GM12878 (cell line): ENCODE measurements at regions of chr18 and their contacts with region 1.

Region 1: GRCh38 chr18:63016270-63016669 is 300.9 kb downstream of the PHLPP1 start:
- DNase-seq: peak; percentile 21
- ATAC-seq: peak; percentile 92
- H3K4me3 ChIP-seq: no peak overlapping the region
- H3K27ac ChIP-seq: no peak overlapping the region
- H3K4me1 ChIP-seq: no peaks in the 10 kb centered on the region
- H3K27me3 ChIP-seq: no peaks in the 10 kb centered on the region
- CTCF ChIP-seq: peak; percentile 72 to 88 (median 72)
- EP300 ChIP-seq: no peak
- POLR2A ChIP-seq: no peak
- RAD21 ChIP-seq: peak; percentile 99

Region 2: GRCh38 chr18:62863579-62864001 is 152.7 kb before region 1 on chr18:
- CTCF ChIA-PET with region 1: no interaction called
- POLR2A ChIA-PET with region 1: no interaction called
- RAD21 ChIA-PET with region 1: no interaction called
- SMC1A ChIA-PET with region 1: no interaction called
- in situ Hi-C with region 1: no loop called
- intact Hi-C with region 1: no loop called
- DNase-seq: no peak
- ATAC-seq: no peak
- H3K4me3 ChIP-seq: no peak overlapping the region
- H3K27ac ChIP-seq: no peak overlapping the region
- H3K4me1 ChIP-seq: no peaks in the 10 kb centered on the region
- H3K27me3 ChIP-seq: no peaks in the 10 kb centered on the region
- CTCF ChIP-seq: no peak
- EP300 ChIP-seq: no peak
- POLR2A ChIP-seq: no peak
- RAD21 ChIP-seq: no peak

Region 3: GRCh38 chr18:62881509-62882016 is 134.7 kb before region 1 on chr18:
- CTCF ChIA-PET with region 1: no interaction called
- POLR2A ChIA-PET with region 1: no interaction called
- RAD21 ChIA-PET with region 1: no interaction called
- SMC1A ChIA-PET with region 1: no interaction called
- in situ Hi-C with region 1: no loop called
- intact Hi-C with region 1: no loop called
- DNase-seq: no peak
- ATAC-seq: peak; percentile 54; the same call in 2 of the 3 replicates
- H3K4me3 ChIP-seq: no peak overlapping the region
- H3K27ac ChIP-seq: 0 out of 2 replicates have a peak overlapping the region, but pooled peaks have one; percentile 13
- H3K4me1 ChIP-seq: peaks cover 12% of the 10 kb centered on the region
- H3K27me3 ChIP-seq: no peaks in the 10 kb centered on the region
- CTCF ChIP-seq: no peak
- EP300 ChIP-seq: no peak
- POLR2A ChIP-seq: no peak
- RAD21 ChIP-seq: no peak

Region 4: DNA sequence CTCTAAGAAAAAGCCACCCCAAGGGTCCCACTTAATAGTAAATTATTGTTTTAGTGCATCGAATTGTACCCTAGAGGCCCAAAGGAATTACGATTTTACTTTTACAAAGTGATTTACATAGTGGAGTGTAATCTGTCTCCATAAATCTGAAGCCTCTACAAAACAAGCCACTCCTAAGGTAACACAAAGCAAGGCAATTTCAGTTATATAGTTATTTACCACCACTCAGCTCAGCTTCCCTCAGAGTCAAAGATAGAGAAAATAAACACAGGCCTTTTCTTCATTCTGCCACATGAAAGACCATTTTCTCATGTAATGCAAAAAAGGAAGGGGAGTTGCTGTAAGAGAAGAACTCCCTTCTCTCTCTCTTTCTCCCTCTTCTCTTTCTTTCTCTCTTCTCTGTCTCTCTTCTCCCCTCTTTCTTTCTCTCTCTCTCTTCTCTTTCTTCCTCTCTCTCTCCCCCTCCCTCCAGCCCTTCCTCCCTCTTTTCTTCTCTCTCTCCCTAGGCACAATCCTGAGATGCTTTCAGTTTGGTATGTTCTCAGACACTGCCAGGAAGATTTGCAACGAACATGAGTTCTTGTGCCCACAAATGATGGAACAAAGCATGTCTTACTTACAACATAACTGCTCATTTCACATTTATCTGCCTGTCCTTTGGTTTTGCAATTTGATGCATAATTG is 38.8 kb after region 1 on chr18:
- CTCF ChIA-PET with region 1: interaction called, 17 read pairs
- POLR2A ChIA-PET with region 1: no interaction called
- RAD21 ChIA-PET with region 1: interaction called, 4 read pairs
- SMC1A ChIA-PET with region 1: interaction called, 6 read pairs
- in situ Hi-C with region 1: no loop called
- intact Hi-C with region 1: no loop called
- DNase-seq: no peak
- ATAC-seq: peak; percentile 14; the same call in 1 of the 3 replicates
- H3K4me3 ChIP-seq: no peak overlapping the region
- H3K27ac ChIP-seq: no peak overlapping the region
- H3K4me1 ChIP-seq: peaks cover 13% of the 10 kb centered on the region
- H3K27me3 ChIP-seq: no peaks in the 10 kb centered on the region
- CTCF ChIP-seq: no peak
- EP300 ChIP-seq: no peak
- POLR2A ChIP-seq: no peak
- RAD21 ChIP-seq: no peak

Region 5: DNA sequence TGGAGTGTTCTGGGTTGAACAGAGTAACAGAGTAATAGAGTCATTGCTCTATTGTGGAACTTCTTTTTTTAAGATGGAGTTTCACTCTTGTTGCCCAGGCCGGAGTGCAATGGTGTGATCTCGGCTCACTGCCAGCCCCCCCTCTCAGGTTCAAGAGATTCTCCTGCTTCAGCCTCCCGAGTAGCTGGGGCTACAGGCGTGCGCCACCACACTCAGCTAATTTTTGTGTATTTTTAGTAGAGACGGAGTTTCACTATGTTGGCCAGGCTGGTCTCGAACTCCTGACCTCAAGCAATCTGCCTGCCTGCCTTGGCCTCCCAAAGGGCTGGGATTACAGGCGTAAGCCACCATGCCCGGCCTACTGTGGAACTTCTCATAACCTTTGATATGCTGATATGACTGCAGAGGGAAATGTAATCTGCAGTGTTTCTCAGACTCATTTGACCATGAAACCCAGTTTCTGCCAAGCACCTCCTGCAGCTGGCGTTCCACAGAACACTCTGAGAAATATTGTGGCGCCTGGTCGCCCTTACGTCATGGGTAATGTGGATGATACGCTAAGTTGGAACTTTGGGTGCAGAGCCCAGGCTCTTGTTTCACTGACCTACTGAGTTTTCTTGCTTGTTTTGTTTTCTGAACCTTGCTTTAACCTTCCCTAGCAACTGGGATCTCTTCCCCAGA is 89.5 kb after region 1 on chr18:
- CTCF ChIA-PET with region 1: interaction called, 16 read pairs
- POLR2A ChIA-PET with region 1: no interaction called
- RAD21 ChIA-PET with region 1: no interaction called
- SMC1A ChIA-PET with region 1: interaction called, 11 read pairs
- in situ Hi-C with region 1: no loop called
- intact Hi-C with region 1: no loop called
- DNase-seq: peak; percentile 73
- ATAC-seq: peak; percentile 81
- H3K4me3 ChIP-seq: peak overlapping the region; percentile 36; the same call in 1 of the 2 replicates
- H3K27ac ChIP-seq: peak overlapping the region; percentile 97
- H3K4me1 ChIP-seq: peaks cover 28% of the 10 kb centered on the region
- H3K27me3 ChIP-seq: no peaks in the 10 kb centered on the region
- CTCF ChIP-seq: no peak
- EP300 ChIP-seq: peak in 1 of 2 experiments; percentile 7; a peak in 1 of 4 replicates
- POLR2A ChIP-seq: no peak
- RAD21 ChIP-seq: no peak

Region 6: GRCh38 chr18:63138436-63139340 is 122.4 kb after region 1 on chr18:
- CTCF ChIA-PET with region 1: interaction called, 21 read pairs
- POLR2A ChIA-PET with region 1: no interaction called
- RAD21 ChIA-PET with region 1: interaction called, 5 read pairs
- SMC1A ChIA-PET with region 1: interaction called, 11 read pairs
- in situ Hi-C with region 1: no loop called
- intact Hi-C with region 1: no loop called
- DNase-seq: peak; percentile 94
- ATAC-seq: peak; percentile 58
- H3K4me3 ChIP-seq: peak overlapping the region; percentile 65
- H3K27ac ChIP-seq: peak overlapping the region; percentile 96
- H3K4me1 ChIP-seq: peaks cover 72% of the 10 kb centered on the region
- H3K27me3 ChIP-seq: no peaks in the 10 kb centered on the region
- CTCF ChIP-seq: no peak
- EP300 ChIP-seq: peak in 1 of 2 experiments; percentile 69; a peak in 1 of 4 replicates
- POLR2A ChIP-seq: peak; percentile 74
- RAD21 ChIP-seq: no peak

Region 7: GRCh38 chr18:63329431-63330145 is 313.3 kb after region 1 on chr18:
- CTCF ChIA-PET with region 1: interaction called, 123 read pairs
- POLR2A ChIA-PET with region 1: interaction called, 7 read pairs
- RAD21 ChIA-PET with region 1: interaction called, 58 read pairs
- SMC1A ChIA-PET with region 1: interaction called, 92 read pairs
- in situ Hi-C with region 1: loop called (anchors 5 kb)
- intact Hi-C with region 1: no loop called
- DNase-seq: no peak
- ATAC-seq: no peak
- H3K4me3 ChIP-seq: no peak overlapping the region
- H3K27ac ChIP-seq: no peak overlapping the region
- H3K4me1 ChIP-seq: no peaks in the 10 kb centered on the region
- H3K27me3 ChIP-seq: no peaks in the 10 kb centered on the region
- CTCF ChIP-seq: no peak
- EP300 ChIP-seq: no peak
- POLR2A ChIP-seq: no peak
- RAD21 ChIP-seq: no peak

Region 8: GRCh38 chr18:63439334-63439733 is 423.1 kb after region 1 on chr18:
- CTCF ChIA-PET with region 1: interaction called, 140 read pairs
- POLR2A ChIA-PET with region 1: interaction called, 3 read pairs
- RAD21 ChIA-PET with region 1: interaction called, 39 read pairs
- SMC1A ChIA-PET with region 1: interaction called, 69 read pairs
- in situ Hi-C with region 1: loop called (anchors 5 kb)
- intact Hi-C with region 1: loop called (anchors 1 kb)
- DNase-seq: no peak
- ATAC-seq: peak; percentile 78
- H3K4me3 ChIP-seq: no peak overlapping the region
- H3K27ac ChIP-seq: no peak overlapping the region
- H3K4me1 ChIP-seq: no peaks in the 10 kb centered on the region
- H3K27me3 ChIP-seq: no peaks in the 10 kb centered on the region
- CTCF ChIP-seq: peak; percentile 82 to 86 (median 86)
- EP300 ChIP-seq: no peak
- POLR2A ChIP-seq: no peak
- RAD21 ChIP-seq: peak; percentile 85